Activated naive CD4-positive, alpha-beta T cell treated with anti-CD3 and anti-CD28 coated beads for 36 hours (primary cell): ENCODE measurements at regions of chr13 and their contacts with region 1.

Region 1: GRCh38 chr13:40777166-40777808 is 6.3 kb upstream of the MRPS31 start:
- DNase-seq: peak; percentile 48
- H3K4me3 Mint-ChIP-seq: peak overlapping the region; percentile 77
- H3K27ac Mint-ChIP-seq: peak overlapping the region; percentile 99
- H3K4me1 Mint-ChIP-seq: peaks cover 25% of the 10 kb centered on the region
- H3K27me3 Mint-ChIP-seq: no peaks in the 10 kb centered on the region

Region 2: DNA sequence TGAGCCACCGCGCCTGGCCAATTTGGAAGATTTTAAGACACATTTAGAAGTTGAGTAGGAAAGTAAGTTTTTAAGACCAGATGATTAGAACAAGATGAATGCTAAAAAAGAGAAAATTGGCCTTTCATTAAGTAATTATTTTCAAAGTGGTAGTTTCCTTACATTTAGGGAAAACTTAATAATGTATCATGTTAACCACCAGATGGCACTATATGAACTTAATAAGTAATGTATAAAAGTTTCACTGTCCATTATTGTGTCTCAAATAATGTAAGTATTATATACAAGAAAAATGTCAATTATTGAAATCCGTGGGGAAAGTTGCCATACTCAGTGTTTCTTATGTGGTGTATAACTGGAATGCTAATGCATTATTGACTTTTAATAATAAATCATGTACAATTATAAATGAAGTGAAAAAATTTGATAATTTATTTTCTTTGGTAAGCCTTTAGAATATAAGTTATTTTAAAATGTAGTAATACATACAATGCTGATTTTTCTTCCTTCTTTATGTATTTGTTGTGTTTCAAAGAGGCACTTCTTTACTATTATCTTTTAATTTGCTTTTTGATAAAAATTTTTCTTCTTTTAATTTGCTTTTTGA is 1092.7 kb before region 1 on chr13:
- CTCF ChIA-PET with region 1: interaction called, 9 read pairs
- intact Hi-C with region 1: loop called (anchors 1 kb)
- DNase-seq: no peak
- H3K4me3 Mint-ChIP-seq: no peak overlapping the region
- H3K27ac Mint-ChIP-seq: no peak overlapping the region
- H3K4me1 Mint-ChIP-seq: peaks cover 16% of the 10 kb centered on the region
- H3K27me3 Mint-ChIP-seq: no peaks in the 10 kb centered on the region

Region 3: DNA sequence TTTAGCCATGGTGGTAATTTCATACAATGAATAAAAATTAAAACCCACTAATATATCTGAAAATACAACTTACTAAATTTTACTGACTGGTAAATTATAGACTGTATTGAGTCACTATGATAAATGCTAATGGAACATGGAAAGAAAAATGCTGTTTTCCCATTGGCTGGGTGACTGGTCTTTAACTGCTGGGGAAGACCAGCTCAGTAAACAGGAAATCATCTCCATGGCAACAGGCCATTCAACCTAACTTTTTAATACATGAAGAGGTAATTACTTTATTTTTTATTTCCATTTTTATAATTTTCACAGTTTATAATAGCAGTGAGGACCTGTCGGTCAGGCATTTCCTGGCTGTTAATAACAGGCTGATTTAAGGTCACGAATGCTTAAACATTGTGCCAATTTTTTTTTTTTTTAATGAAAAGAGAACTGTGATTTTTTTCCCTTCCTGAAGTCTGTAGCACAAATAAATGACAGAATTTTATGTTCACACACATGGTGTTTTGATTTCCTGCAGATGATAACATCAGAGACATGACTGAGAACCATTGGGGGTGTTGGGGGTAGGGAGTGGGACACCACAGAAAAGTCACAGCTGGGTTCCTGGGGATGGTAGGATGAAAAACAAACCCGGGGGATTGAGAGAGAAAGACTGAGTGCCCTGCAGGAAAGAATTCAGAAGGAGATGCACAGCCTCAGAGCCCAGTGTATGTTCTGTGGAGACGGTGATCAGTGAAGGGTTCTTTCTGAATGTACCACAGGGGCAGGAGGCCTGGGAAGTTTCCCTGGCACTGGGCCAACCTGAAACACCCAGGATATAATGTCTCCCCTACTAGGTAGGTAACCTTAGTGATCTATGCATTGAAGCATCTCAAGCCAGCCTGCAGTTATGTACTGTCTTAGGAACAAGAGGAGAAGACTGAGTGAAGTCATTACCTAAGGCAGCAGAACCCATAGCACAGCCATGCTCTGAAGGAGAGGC is 824.7 kb before region 1 on chr13:
- CTCF ChIA-PET with region 1: no interaction called
- intact Hi-C with region 1: loop called (anchors 5 kb)
- DNase-seq: peak; percentile 27
- H3K4me3 Mint-ChIP-seq: no peak overlapping the region
- H3K27ac Mint-ChIP-seq: peak overlapping the region; percentile 5
- H3K4me1 Mint-ChIP-seq: peaks cover 48% of the 10 kb centered on the region
- H3K27me3 Mint-ChIP-seq: no peaks in the 10 kb centered on the region

Region 4: DNA sequence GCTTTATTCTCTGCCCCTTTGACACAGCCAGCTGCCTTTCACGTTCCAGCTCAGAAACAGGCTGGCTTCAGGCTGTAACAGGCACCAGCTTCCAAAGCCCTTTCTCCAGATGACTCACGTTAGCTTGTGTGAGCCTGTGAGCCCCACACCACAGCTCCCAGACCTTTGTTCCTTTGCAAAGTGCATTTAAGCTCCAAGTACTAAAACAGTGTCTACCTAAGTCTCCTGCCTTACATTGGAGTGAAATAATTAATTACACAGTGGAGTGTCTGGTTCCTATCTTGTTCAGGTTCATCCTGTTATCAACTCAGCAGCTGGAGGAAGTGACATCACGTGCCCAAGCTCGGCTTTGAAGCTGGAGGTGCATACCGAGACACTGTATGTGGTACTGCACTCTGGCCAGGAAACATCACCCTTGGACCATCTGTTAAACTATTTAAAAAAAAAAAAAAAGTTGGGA is 586.6 kb before region 1 on chr13:
- CTCF ChIA-PET with region 1: interaction called, 3 read pairs
- intact Hi-C with region 1: loop called (anchors 2 kb)
- DNase-seq: peak; percentile 91
- H3K4me3 Mint-ChIP-seq: peak overlapping the region; percentile 36
- H3K27ac Mint-ChIP-seq: peak overlapping the region; percentile 81
- H3K4me1 Mint-ChIP-seq: peaks cover 69% of the 10 kb centered on the region
- H3K27me3 Mint-ChIP-seq: no peaks in the 10 kb centered on the region

Region 5: DNA sequence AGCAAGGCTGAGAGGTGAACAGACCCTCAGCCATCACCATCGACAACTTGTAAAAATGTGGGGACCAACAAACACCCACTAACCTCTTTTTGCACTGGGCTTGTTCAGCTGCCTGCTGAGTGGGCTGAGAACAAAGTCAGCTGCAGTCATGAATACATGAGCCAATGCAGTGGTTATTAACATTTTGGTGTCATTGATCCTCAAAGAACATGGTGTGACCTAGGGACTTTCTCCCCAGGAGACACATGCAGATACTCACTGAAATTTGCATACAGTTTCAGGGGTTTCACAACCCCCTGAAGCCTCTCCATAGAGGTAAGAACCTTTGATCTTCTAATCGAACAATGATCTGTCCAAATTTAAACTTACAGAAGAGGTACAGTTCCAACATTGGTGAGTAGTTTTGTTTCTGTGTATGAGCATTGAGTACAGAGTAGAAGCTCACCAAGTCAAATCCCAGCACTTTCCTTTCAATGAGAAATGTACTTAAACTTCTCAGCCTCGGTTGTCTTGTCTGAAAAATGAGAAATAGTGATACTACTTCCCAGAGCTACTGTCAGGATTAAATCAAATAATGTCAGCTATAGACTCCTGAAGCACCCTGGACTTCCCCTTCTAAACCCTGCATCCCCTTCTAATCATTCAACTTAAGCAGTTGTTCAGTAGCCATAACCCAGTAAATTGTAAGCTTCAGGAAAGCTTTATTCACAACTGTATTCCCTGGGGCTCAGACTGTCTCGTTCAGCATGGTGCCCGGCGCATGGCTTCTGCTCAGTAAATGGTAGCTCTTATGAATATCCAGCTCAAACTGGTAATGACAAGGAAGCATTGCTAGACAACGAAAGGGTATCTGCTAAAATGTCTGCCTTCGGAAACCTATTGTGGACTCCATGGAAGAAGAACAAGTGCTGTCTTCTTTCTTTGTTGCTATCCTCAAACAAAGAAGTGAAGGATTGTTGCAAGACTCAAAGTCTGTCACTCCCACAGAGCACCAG is 259.5 kb before region 1 on chr13:
- CTCF ChIA-PET with region 1: no interaction called
- intact Hi-C with region 1: loop called (anchors 2 kb)
- DNase-seq: peak; percentile 57
- H3K4me3 Mint-ChIP-seq: peak overlapping the region; percentile 23
- H3K27ac Mint-ChIP-seq: peak overlapping the region; percentile 87
- H3K4me1 Mint-ChIP-seq: peaks cover 78% of the 10 kb centered on the region
- H3K27me3 Mint-ChIP-seq: no peaks in the 10 kb centered on the region

Region 6: DNA sequence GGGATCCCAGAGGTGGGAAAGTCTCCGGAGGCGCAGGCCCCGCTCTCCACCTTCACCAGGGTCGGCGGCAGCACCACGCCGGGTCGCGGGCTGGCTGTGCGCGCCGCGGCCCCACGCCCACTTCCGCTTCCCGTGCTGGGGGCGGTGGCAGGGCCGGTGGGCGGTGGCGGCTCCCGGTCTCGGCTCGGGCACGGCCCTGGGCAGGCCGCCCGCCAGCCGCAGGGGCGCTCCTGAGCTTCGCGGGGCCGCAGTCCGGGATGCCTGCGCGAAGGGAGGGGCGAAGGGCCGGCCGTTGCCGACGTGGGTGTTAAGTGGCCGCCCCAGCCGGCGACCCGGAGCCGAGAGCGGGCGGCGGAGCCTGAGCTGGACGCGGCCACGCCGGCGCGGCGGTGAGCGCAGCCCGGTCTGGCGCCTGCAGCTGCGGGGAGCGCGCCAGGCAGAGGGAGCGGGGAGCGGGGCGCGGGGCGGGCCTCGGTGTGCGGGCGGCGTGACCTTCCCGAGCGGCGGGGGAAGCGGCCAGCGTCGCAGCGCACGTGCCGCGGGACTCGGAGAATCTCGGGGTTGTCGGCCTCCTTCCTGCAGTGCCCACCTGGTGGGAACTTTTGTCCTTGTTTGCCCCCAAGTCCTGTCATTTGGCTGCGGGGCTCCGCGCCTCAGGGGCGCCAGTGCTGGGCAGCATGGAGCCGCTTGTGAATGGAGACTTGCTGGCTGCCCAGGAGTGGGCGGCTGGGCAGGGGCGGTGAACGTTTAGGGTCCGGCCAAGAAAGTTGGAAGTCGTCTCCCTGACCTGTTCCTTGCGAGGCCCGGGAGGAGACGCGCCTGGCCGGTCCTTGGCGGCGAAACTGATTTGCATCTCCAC is 12.2 kb after region 1 on chr13 and contains the start of gene SLC25A15:
- CTCF ChIA-PET with region 1: interaction called, 17 read pairs
- intact Hi-C with region 1: no loop called
- DNase-seq: peak; percentile 72
- H3K4me3 Mint-ChIP-seq: peak within 1 kb of the TSS; percentile 81
- H3K27ac Mint-ChIP-seq: peak within 1 kb of the TSS; percentile 79
- H3K4me1 Mint-ChIP-seq: peaks cover 34% of the 10 kb centered on the region
- H3K27me3 Mint-ChIP-seq: no peaks in the 10 kb centered on the region
- total RNA-seq, gene SLC25A15: 15.5 to 15.6 TPM

Region 7: DNA sequence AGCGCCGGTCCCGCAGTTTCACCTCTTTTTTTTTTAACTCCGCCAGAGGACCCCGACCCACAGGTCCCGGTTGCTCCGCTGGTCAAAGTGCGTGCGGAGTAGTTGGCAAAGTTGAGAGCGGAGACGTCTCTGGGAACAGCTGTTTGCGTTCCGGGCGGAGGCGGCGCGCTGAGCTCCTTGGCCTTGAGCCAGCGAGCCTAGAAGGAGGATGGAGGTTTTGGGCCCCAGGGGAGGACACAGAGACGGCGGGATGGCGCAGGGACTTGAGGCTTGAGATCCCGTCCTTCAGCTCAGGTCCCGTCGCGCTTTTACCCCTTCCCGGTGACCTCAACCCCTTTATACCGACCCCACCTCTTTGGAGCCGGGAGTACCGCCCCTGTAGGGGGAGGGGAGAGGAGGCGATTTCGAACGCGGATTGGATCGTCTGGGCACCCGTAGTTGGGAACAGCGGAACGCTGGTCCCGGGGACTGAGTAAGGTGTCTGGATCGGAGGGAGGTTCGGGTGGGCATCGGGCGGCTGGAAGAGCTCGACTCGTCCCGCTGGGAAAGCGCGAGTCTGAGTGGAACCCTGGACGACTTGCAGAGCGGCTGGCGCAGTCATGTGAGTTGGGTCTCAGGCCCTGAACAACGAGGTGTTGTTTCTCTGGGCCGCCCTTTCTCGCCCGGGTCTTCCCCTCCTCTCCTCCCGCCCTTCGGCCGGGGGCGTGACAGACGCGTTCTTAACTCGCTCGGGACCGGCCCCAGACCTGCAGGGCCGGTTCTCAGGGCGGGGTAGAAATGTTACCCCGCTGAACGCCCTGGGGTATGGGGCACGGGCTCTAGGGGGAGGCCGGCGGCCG is 284.0 kb after region 1 on chr13 and contains the start of gene WBP4:
- CTCF ChIA-PET with region 1: no interaction called
- intact Hi-C with region 1: loop called (anchors 1 kb)
- DNase-seq: peak; percentile 88
- H3K4me3 Mint-ChIP-seq: peak within 1 kb of the TSS; percentile 95
- H3K27ac Mint-ChIP-seq: peak within 1 kb of the TSS; percentile 98
- H3K4me1 Mint-ChIP-seq: peaks cover 45% of the 10 kb centered on the region
- H3K27me3 Mint-ChIP-seq: peaks cover 4% of the 10 kb centered on the region
- total RNA-seq, gene WBP4: 8.1 to 8.2 TPM